Activated CD4-positive, alpha-beta T cell treated with anti-CD3 and anti-CD28 coated beads for 36 hours (primary cell): ENCODE measurements at regions of chr11 and their contacts with region 1.

Region 1: GRCh38 chr11:64225612-64226506 is at the starts of genes NUDT22 and TRPT1:
- DNase-seq: peak; percentile 96
- ATAC-seq: peak; percentile 72
- H3K4me3 Mint-ChIP-seq: peak within 1 kb of the TSS; percentile 87
- H3K27ac Mint-ChIP-seq: peak within 1 kb of the TSS; percentile 85
- H3K4me1 Mint-ChIP-seq: peaks cover 32% of the 10 kb centered on the region
- H3K27me3 Mint-ChIP-seq: no peaks in the 10 kb centered on the region
- total RNA-seq, gene NUDT22: 61.8 to 74.1 TPM
- total RNA-seq, gene TRPT1: 23.9 to 27.1 TPM

Region 2: DNA sequence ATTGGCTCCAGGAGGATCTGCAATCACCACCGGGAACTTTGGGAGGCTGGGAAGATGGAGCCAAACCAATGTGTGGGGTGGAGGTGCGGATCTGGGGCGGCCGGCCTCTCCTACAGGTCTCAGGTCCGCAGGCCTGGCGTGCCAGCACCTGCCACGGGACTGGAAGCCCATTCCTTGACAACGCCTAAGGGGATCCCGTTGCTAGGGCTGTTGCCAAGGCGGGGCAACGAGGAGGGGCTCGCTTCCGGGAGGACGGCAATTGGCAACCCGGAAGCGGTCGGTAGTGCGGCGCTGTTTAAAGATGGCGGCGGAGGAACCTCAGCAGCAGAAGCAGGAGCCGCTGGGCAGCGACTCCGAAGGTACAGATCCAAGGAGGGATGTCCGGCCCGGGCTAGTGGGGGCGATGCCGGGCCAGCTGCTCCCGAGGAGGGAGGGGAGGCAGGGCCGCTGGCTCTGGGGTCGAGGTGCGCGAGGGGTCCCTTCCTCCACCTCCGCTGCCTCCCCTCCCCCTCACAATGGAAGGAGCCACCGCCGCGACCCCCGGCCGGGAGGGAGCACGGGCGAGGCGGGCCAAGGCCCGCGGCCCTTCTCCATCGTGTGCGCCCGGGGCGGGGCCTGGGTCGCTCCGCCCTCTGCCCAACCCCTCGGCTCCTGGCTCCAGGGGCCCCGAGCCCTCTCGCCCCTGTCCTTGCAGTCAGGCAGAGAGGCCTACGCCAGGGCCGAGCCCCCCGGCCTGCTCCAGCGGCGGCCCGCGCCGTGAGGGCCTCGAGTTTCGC is 239.5 kb before region 1 on chr11 and contains the start of gene OTUB1:
- CTCF ChIA-PET with region 1: no interaction called
- POLR2A ChIA-PET with region 1: no interaction called
- intact Hi-C with region 1: loop called in 1 of 2 experiments (anchors 5 kb)
- DNase-seq: peak; percentile 94
- ATAC-seq: peak; percentile 92
- H3K4me3 Mint-ChIP-seq: peak within 1 kb of the TSS; percentile 93
- H3K27ac Mint-ChIP-seq: peak within 1 kb of the TSS; percentile 89
- H3K4me1 Mint-ChIP-seq: peaks cover 23% of the 10 kb centered on the region
- H3K27me3 Mint-ChIP-seq: no peaks in the 10 kb centered on the region
- total RNA-seq, gene OTUB1: 77.4 to 86.1 TPM

Region 3: GRCh38 chr11:64165849-64166635 is 59.8 kb before region 1 on chr11 and contains the start of gene MACROD1:
- CTCF ChIA-PET with region 1: no interaction called
- POLR2A ChIA-PET with region 1: no interaction called
- intact Hi-C with region 1: loop called in 1 of 2 experiments (anchors 2 kb)
- DNase-seq: peak; percentile 92
- ATAC-seq: peak; percentile 94
- H3K4me3 Mint-ChIP-seq: peak within 1 kb of the TSS; percentile 92
- H3K27ac Mint-ChIP-seq: peak within 1 kb of the TSS; percentile 83
- H3K4me1 Mint-ChIP-seq: peaks cover 9% of the 10 kb centered on the region
- H3K27me3 Mint-ChIP-seq: no peaks in the 10 kb centered on the region
- total RNA-seq, gene MACROD1: 26.4 to 28.6 TPM

Region 4: GRCh38 chr11:64240394-64241174 is 14.7 kb after region 1 on chr11 and contains the start of gene FKBP2:
- CTCF ChIA-PET with region 1: interaction called, 5 read pairs
- POLR2A ChIA-PET with region 1: interaction called, 5 read pairs
- intact Hi-C with region 1: loop called (anchors 1 kb)
- DNase-seq: peak; percentile 99
- ATAC-seq: peak; percentile 68
- H3K4me3 Mint-ChIP-seq: peak within 1 kb of the TSS; percentile 86
- H3K27ac Mint-ChIP-seq: peak within 1 kb of the TSS; percentile 99
- H3K4me1 Mint-ChIP-seq: peaks cover 31% of the 10 kb centered on the region
- H3K27me3 Mint-ChIP-seq: no peaks in the 10 kb centered on the region
- total RNA-seq, gene FKBP2: 19.9 to 21.3 TPM

Region 5: DNA sequence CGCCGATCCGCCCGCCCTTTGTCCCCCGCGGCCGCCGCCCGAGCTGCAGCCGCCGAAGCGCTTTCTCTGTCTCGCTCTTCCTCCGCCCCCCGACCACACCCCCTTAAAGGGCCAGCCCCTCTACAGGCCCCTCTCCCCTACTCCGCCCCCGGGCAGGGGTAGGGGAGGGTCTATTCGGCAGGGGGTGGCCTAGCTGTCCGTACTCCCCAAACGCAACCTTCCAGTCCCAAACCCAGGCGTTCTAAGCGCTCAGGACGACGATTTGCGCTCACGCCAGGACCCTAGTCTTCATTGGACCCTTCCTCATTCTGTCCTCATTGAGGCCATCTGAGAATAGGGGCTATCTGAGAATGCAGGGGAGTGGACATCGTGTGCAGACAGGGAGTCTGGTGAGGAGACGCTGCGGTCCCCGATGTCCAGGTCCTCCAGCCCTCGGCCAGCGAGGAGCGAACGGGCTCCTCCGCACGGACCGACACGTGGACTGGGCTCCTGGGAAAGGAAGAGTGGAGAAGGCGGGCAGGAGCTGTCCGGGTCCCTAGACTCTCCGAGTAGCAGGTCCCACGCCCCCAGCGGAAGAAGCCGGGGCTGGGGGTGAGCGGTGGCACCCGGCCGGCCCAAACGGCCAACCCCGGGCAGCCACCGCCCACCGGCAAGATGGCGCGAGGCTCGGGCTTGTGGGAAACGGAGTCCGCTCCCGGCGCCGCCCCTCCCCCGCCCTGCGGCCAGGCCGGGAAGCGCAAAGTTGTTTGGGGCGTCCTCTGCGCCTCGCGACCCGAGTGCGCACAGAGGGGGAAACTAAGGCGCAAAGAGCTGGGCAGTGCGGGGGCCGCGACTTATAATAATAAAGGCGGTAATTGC is 21.2 kb after region 1 on chr11 and contains the start of gene PPP1R14B:
- CTCF ChIA-PET with region 1: interaction called, 3 read pairs
- POLR2A ChIA-PET with region 1: no interaction called
- intact Hi-C with region 1: loop called in 1 of 2 experiments (anchors 1 kb)
- DNase-seq: peak; percentile 89
- ATAC-seq: peak; percentile 54
- H3K4me3 Mint-ChIP-seq: peak within 1 kb of the TSS; percentile 94
- H3K27ac Mint-ChIP-seq: peak within 1 kb of the TSS; percentile 92
- H3K4me1 Mint-ChIP-seq: peaks cover 34% of the 10 kb centered on the region
- H3K27me3 Mint-ChIP-seq: no peaks in the 10 kb centered on the region
- total RNA-seq, gene PPP1R14B: 261 to 267 TPM

Region 6: GRCh38 chr11:64409707-64410403 is 184.0 kb after region 1 on chr11:
- CTCF ChIA-PET with region 1: no interaction called
- POLR2A ChIA-PET with region 1: no interaction called
- intact Hi-C with region 1: no loop called
- DNase-seq: no peak
- ATAC-seq: no peak
- H3K4me3 Mint-ChIP-seq: no peak overlapping the region
- H3K27ac Mint-ChIP-seq: no peak overlapping the region
- H3K4me1 Mint-ChIP-seq: no peaks in the 10 kb centered on the region
- H3K27me3 Mint-ChIP-seq: no peaks in the 10 kb centered on the region